ENCODE measurements at regions of chr1 and their contacts with region 1.

Region 1: DNA sequence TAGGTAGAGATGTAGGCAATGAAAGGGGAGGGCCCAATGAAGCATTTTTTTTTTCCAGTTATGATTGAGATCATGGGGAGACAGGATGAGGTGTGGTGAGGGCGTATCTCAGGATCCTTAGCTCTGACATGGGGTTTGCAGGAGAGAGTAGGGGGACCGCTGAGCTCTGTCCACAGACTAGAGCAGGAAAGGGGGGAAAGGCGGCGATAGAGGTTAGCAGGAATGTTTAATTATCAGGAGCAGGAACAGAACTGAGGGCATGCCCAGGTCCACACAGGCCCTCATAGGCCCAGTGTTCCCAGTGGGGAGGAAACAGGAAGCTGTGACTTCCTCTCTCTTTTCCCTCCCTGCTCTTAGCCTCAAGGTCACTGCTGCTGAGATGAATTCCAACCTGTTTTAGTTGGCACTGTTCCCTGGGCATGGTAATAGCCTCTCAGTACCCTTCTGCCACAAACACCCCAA is 876 bp upstream of the RXFP4 start:
- DNase-seq: no peak
- H3K4me3 ChIP-seq: no peak overlapping the region
- H3K27ac ChIP-seq: peak overlapping the region; percentile 75 to 86
- H3K4me1 ChIP-seq: peaks cover 0 to 27% of the 10 kb centered on the region in 2 donors
- H3K27me3 ChIP-seq: no peaks in the 10 kb centered on the region
- CTCF ChIP-seq: no peak
- POLR2A ChIP-seq: no peak

Region 2: DNA sequence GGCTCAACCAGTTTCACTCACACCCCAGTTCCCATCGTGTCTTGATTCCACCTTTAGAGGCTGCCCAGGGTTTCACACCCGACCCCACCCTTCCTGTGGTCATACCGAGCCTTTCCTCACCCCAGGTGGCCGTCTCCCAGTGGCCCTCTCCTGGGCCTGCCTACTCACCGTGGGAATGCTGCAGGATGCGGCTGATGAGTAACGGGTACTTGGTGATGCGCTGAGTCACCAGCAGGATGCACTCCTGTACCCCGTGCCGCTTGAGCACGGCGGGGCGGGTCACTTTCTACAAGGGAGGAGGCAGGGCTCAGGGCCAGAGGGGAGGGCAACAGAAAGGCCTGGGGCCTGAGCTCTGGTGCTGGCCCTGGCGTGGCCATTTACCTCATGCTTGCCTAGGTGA is 21.4 kb after region 1 on chr1:
- intact Hi-C with region 1: no loop called
- DNase-seq: no peak
- H3K4me3 ChIP-seq: no peak overlapping the region
- H3K27ac ChIP-seq: peak overlapping the region; percentile 30 to 69
- H3K4me1 ChIP-seq: peaks cover 0 to 8% of the 10 kb centered on the region in 2 donors
- H3K27me3 ChIP-seq: no peaks in the 10 kb centered on the region
- CTCF ChIP-seq: peak in 1 of 3 donors; percentile 19
- POLR2A ChIP-seq: no peak

Region 3: GRCh38 chr1:155989242-155990004 is 48.9 kb after region 1 on chr1:
- intact Hi-C with region 1: loop called (anchors 5 kb)
- DNase-seq: peak; percentile 71 to 74
- H3K4me3 ChIP-seq: peak overlapping the region; percentile 29 to 59 (median 30)
- H3K27ac ChIP-seq: peak overlapping the region; percentile 21 to 59
- H3K4me1 ChIP-seq: no peaks in the 10 kb centered on the region
- H3K27me3 ChIP-seq: no peaks in the 10 kb centered on the region
- CTCF ChIP-seq: peak; percentile 97 to 99 (median 97)
- POLR2A ChIP-seq: no peak

Region 4: DNA sequence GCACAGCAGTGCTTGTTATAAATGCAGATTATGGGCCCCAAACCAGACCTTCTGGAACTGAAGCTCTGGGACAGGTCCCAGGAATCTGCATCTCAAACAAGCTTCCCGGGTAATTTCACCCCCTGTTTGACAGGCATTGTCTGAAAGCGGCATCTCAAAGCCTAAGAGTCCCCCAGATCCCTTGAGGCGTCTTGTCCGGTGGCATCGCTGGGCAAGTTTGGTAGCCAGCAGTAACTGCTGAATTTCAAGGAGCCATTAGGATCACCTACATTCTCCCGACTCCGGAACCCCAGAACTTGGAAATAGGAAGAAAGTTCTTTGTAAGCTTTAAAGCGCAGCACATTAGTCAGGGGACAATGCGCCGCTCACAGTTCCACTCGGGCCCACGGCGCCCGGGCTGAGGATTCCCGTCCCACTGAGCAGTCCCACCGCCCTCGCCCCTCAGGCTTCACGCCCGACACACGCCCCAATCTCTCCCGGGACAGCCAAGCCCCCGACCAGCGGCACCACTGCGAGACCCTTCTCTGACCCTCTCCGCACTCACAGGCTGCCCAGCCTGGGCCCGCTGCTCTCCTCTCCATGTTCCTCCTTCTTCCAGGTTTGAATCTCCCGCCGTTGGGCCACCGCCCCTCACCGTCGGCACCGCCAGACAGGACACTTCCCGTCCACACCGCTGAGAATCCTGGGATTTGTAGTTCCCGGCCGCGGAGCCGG is 631.5 kb after region 1 on chr1 and contains the start of gene IQGAP3:
- intact Hi-C with region 1: no loop called
- DNase-seq: peak; percentile 77 to 84
- H3K4me3 ChIP-seq: peak within 1 kb of the TSS; percentile 34 to 63 (median 50)
- H3K27ac ChIP-seq: no peak within 1 kb of the TSS
- H3K4me1 ChIP-seq: no peaks in the 10 kb centered on the region
- H3K27me3 ChIP-seq: peaks cover 0 to 6% of the 10 kb centered on the region in 2 donors
- CTCF ChIP-seq: no peak
- POLR2A ChIP-seq: no peak
- total RNA-seq, gene IQGAP3: under 0.01 to 1.4 (median 0.15) TPM

Measured in breast epithelium (tissue), 4 donors.